ENCODE measurements at regions of chr17 and their contacts with region 1.

Region 1: GRCh38 chr17:74379495-74380085 is 12.3 kb downstream of the GPR142 start:
- DNase-seq: peak; percentile 95
- H3K4me3 Mint-ChIP-seq: no peak overlapping the region
- H3K27ac Mint-ChIP-seq: no peak overlapping the region
- H3K4me1 Mint-ChIP-seq: peaks cover 13% of the 10 kb centered on the region
- H3K27me3 Mint-ChIP-seq: peaks cover 57% of the 10 kb centered on the region

Region 2: GRCh38 chr17:74437702-74438101 is 58.1 kb after region 1 on chr17:
- CTCF ChIA-PET with region 1: interaction called, 15 read pairs
- DNase-seq: peak; percentile 45
- H3K4me3 Mint-ChIP-seq: no peak overlapping the region
- H3K27ac Mint-ChIP-seq: no peak overlapping the region
- H3K4me1 Mint-ChIP-seq: peaks cover 2% of the 10 kb centered on the region
- H3K27me3 Mint-ChIP-seq: peaks cover 77% of the 10 kb centered on the region

Region 3: GRCh38 chr17:74457146-74457819 is 77.7 kb after region 1 on chr17:
- CTCF ChIA-PET with region 1: interaction called, 107 read pairs
- DNase-seq: peak; percentile 76
- H3K4me3 Mint-ChIP-seq: no peak overlapping the region
- H3K27ac Mint-ChIP-seq: peak overlapping the region; percentile 73
- H3K4me1 Mint-ChIP-seq: peaks cover 47% of the 10 kb centered on the region
- H3K27me3 Mint-ChIP-seq: peaks cover 77% of the 10 kb centered on the region

Region 4: DNA sequence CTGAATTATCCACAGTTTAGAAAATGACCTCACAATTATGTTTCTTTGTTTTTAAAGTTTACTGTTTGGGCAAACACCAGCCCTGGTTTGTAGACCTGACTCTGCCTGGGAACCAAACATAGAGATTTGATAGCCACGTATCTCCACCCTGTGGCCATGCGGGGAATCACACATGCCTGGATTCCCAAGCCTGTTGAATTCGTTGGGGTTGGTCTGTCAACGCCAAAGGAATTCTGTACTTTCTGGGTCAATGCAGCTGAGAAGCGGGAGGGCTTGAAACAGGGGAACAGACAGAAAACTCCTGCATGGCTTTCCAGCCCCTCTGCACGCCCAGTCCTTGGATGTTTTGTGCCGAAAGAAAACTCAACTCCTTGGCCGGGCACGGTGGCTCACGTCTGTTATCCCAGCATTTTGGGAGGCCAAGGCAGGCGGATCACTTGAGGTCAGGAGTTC is 113.8 kb after region 1 on chr17:
- CTCF ChIA-PET with region 1: interaction called, 55 read pairs
- DNase-seq: peak; percentile 80
- H3K4me3 Mint-ChIP-seq: no peak overlapping the region
- H3K27ac Mint-ChIP-seq: no peak overlapping the region
- H3K4me1 Mint-ChIP-seq: peaks cover 8% of the 10 kb centered on the region
- H3K27me3 Mint-ChIP-seq: peaks cover 52% of the 10 kb centered on the region

Region 5: DNA sequence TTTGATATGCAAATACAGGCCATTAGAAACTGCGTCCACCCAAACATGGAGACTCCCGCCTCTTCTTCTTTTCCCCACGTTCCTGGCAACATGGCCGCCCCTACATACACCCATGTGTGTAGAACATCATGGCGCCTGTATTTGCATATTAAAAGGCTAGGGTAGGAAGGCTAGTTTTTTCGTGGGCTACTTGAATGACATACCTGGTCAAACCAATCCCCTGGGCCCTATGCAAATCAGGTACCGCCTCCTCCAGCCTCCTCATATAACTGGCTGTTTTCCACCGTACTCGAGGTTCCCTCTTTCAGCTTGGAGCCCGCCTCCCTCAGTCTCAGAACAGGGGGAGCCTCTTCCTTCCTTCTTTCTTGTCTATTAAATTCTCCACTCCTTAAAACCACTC is 152.5 kb after region 1 on chr17:
- CTCF ChIA-PET with region 1: interaction called, 15 read pairs
- DNase-seq: no peak
- H3K4me3 Mint-ChIP-seq: no peak overlapping the region
- H3K27ac Mint-ChIP-seq: no peak overlapping the region
- H3K4me1 Mint-ChIP-seq: peaks cover 2% of the 10 kb centered on the region
- H3K27me3 Mint-ChIP-seq: peaks cover 76% of the 10 kb centered on the region

Measured in activated naive CD4-positive, alpha-beta T cell treated with anti-CD3 and anti-CD28 coated beads, Interleukin-2, amount 10 ng/mL, durations not matched to agents 7 days and 5 days (primary cell).